ENCODE measurements at regions of chr12 and their contacts with region 1.

Region 1: DNA sequence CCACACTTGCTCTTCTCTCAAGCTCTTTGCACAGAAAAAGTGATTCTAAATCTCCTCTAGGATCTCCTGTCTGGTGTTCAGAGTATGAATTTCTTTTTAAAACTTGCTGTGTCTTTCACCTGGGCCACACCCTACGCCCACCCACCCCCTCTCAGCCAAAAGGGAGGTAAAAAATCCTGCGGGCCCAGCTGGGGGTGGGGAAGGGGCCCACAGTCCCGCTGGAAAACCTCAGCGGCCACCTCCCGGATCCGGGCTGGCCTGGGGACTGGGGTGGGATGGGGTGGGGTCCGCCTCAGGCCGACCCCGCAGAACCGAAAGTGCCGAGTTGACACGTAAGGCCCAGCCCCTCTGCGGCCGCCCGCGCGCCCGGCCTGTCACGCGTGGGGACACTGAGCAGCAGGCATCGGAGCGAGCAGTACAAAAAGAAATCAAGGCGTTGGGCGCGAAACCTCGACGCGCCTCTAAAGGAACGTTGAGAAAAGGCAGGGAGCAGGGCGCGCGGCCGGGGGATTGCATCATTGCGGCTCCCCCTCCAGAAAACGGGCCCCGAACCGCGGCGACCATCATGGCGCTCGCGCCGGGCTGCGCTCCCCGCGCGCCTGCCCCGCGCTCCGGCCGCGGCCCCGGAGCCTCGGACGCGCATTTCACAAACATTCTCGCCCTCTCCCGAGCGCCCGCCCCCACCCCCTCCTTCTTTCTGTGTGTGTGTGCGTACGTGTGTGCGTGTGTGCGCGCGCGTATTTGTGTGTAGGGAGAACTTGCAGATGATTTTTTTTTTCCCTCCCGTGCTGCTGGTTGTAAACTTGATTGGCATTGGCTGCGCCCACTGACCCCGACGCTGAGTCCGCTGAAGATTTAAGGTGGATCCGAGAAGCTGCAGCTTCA is 7.7 kb downstream of the CDKN1B start:
- DNase-seq: peak; percentile 96
- H3K4me3 Mint-ChIP-seq: peak overlapping the region; percentile 85
- H3K27ac Mint-ChIP-seq: peak overlapping the region; percentile 98
- H3K4me1 Mint-ChIP-seq: peaks cover 43% of the 10 kb centered on the region
- H3K27me3 Mint-ChIP-seq: peaks cover 3% of the 10 kb centered on the region

Region 2: GRCh38 chr12:12356886-12357718 is 367.8 kb before region 1 on chr12 and contains the start of gene BORCS5:
- intact Hi-C with region 1: loop called (anchors 2 kb)
- DNase-seq: peak; percentile 100
- H3K4me3 Mint-ChIP-seq: peak within 1 kb of the TSS; percentile 98
- H3K27ac Mint-ChIP-seq: peak within 1 kb of the TSS; percentile 99
- H3K4me1 Mint-ChIP-seq: peaks cover 46% of the 10 kb centered on the region
- H3K27me3 Mint-ChIP-seq: no peaks in the 10 kb centered on the region
- total RNA-seq, gene BORCS5: 34.0 and 37.0 TPM in 2 replicates

Region 3: DNA sequence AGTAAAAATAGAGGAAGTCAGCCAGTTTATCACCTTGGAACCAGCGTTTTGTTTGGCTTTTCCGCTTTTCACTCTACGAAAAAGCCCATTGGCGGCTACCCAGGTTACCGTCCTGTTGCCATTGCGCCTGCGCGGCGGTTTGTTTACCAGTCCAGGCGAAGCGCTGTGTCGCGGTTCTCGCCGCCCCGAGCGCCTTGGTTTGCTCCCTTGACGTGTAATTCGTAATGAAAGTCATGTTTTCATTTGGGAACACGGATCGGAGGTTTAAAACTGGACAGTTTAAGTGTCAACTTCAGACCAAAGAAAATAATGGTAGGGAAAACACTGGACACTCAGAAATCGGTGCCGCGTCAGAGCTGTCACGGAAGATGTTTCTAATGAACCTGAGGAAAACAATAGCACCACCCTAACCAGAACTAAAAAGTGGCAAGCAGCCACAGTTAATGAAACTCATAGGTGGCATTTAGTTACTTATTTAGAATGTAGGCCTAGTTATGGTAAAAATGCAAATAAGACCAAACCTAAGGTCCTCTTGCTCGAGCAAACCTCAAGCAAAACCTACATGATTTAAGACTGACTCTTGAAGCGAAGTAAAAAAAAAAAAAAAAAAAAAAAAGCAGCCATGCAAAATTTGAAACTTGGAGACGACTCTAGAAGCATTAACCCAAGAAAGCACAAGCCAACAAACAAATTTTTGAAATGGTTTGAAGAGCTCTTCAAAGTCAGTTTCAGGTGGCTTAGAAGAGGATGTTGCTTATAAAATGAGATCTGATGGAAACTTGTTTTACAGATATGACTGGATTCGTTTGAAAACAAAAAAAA is 28.1 kb before region 1 on chr12:
- intact Hi-C with region 1: loop called (anchors 2 kb)
- DNase-seq: peak; percentile 98
- H3K4me3 Mint-ChIP-seq: peak overlapping the region; percentile 94
- H3K27ac Mint-ChIP-seq: peak overlapping the region; percentile 99
- H3K4me1 Mint-ChIP-seq: peaks cover 60% of the 10 kb centered on the region
- H3K27me3 Mint-ChIP-seq: no peaks in the 10 kb centered on the region

Region 4: DNA sequence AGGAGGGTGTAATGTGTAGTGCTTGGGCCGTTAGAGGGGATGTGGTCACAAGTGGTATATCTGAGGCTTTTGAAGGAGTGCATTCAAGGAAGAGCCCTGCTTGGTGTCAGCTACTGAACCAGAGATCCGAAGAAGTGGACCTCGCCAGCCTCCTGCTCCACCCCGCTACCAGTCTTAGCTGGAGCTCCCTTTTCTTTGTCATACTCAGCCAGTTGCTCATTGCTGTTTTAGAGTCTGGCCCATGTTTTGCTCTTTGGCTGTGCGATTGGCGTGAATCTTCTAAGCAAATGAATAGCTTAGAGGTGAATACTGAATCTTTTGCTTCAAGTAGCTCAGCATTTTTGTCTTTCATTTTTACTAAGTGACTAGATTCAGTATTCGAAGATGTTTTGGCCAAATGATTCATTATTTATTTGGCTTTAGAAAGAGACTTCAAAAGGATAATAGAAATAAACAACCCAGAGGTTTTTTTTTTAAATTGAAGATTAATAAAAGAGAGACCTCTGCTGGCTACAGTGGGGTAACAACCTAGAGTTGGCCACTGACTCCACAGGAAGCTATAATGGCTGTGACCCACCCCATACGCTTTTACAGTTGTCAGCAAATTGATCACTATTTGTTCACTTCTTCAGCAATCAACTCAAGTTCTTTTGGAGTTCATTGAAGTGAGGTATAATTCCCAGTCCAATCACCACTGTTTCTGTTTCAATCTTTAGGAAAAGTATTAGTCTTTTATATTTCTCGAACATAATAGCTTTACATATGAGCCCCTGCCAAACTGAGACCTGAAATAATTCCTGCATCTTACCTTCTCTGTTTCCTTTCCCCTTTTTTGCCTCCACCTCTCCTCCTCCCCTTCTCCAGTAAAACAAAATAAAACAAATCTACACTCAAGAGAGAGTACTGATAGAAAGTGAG is 12.1 kb after region 1 on chr12:
- intact Hi-C with region 1: loop called (anchors 1 kb)
- DNase-seq: peak; percentile 85
- H3K4me3 Mint-ChIP-seq: peak overlapping the region; percentile 85
- H3K27ac Mint-ChIP-seq: peak overlapping the region; percentile 95
- H3K4me1 Mint-ChIP-seq: peaks cover 47% of the 10 kb centered on the region
- H3K27me3 Mint-ChIP-seq: no peaks in the 10 kb centered on the region

Region 5: DNA sequence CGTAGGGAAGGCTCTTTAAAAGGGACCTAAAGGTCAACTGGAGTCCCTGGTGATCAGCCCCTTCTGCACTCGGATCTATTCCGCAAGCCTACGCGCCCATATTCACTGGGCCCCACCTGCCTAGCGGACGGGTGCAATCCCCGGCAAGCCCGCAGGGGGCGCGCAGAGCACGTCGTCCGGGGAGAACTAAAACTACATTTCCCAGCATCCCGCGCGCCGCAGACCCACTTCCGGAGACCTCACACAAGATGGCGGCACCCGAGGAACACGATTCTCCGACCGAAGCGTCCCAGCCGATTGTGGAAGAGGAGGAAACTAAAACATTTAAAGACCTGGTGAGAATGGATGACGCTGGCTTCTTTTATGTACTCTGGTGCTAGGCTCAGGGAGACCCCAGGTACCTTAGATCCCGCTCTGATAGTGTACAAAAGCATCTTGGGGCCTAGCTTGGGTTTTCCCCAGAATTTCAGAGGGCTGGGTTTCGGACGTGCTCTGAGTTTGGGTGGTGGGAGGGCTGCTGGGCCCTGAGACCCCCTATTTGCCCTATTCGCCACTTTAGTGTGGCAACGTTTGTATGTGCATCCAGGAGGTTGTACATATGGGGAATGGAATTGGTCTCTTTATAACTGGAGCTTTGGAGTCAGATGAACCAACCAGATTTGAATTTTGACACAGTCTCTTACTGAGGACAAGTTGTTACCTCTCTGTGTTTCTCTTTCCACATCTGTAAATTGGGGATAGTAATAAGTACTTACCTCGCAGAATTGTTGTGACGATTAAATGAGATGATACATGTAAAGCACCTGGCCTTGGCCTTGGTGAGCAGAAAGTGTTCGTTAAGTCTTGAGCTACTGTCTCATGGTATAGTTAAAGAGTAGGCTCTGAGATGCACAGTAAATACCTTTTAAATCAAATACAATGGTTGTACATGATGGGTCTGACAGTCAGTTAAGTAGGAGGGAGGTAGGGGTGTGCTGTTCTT is 88.5 kb after region 1 on chr12 and contains the start of gene DDX47:
- intact Hi-C with region 1: loop called (anchors 5 kb)
- DNase-seq: peak; percentile 99
- H3K4me3 Mint-ChIP-seq: peak within 1 kb of the TSS; percentile 93
- H3K27ac Mint-ChIP-seq: peak within 1 kb of the TSS; percentile 96
- H3K4me1 Mint-ChIP-seq: peaks cover 48% of the 10 kb centered on the region
- H3K27me3 Mint-ChIP-seq: no peaks in the 10 kb centered on the region
- total RNA-seq, gene DDX47: 123 and 133 TPM in 2 replicates